GM10248 (cell line): ENCODE measurements at regions of chr2 and their contacts with region 1.

Region 1: GRCh38 chr2:232292395-232293154 is 86.0 kb upstream of the ALPP start:
- DNase-seq: peak; percentile 70
- CTCF ChIP-seq: peak; percentile 77

Region 2: DNA sequence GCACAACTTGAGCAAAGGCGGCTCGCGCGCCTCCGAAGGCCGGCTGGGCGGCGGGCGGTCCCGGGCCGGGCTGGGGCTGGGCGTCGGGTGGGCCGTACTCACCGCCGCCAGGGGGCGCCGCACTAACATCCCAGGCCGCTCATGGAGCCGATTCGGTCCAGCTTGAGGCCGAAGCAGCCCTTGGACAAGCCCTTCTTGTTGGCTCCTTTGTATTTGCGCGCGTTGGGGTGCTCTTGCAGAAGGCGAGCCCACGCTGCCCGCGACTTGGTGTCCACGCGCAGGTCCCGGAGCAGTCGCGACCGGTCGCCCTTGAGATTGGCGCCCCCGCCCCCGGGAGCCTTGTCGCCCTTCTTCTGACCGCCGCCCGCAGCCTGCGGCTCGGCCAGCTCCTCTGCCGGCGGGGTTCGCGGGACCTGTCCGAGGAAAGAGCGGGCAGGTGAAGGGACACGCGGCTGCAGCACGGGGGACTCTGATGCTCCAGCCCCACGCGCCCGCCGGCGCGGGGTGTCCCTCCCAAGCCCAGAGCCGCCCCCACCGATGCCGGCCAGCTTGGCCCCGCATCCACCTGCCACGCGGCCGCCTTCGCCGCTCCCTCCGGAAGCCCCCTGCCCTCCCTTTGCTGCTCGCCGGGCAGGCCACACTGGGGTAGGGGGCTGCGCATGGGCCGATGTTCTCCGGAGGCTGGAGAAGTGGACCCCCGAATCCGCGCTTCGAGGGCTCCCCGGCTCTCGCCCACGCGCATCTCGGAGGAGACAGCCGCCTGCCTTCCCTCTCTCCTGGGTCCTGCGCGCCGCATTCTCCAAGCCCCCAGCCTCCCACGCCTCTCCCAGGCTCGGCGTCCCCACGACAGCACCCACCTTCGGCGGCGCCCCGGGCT is 367.0 kb before region 1 on chr2:
- CTCF ChIA-PET with region 1: interaction called, 12 read pairs
- POLR2A ChIA-PET with region 1: no interaction called
- DNase-seq: peak; percentile 88
- CTCF ChIP-seq: peak; percentile 70

Region 3: DNA sequence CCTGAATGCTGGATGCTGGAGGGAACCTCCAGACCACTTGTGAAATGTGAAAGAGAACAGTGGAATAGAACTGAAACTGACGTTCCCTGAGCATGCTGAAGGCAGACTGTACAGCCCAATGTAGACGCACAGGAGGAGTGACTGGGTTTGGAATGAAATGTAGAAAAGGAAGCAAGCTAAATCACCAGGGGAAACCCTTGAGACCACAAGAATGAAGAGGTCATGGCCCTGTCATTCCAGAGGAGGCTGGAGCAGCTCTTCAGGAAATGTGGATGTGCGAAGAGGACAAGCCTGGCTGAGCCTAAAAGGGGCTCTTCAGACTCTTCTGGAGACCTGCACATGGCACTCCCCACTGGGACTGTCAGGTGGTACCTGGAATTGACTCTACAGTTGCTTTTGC is 32.5 kb before region 1 on chr2:
- CTCF ChIA-PET with region 1: interaction called, 12 read pairs
- POLR2A ChIA-PET with region 1: no interaction called
- DNase-seq: no peak
- CTCF ChIP-seq: no peak

Region 4: GRCh38 chr2:232315049-232315922 is 22.7 kb after region 1 on chr2:
- CTCF ChIA-PET with region 1: interaction called, 106 read pairs
- POLR2A ChIA-PET with region 1: interaction called, 3 read pairs
- DNase-seq: peak; percentile 58
- CTCF ChIP-seq: peak; percentile 13